Dendritic cell treated with granulocyte-macrophage colony-stimulating factor and Interleukin-4, amounts not matched to agents 40 ng/mL and 50 ng/mL, for 4 days (primary cell): ENCODE measurements at regions of chr19 and their contacts with region 1.

Region 1: DNA sequence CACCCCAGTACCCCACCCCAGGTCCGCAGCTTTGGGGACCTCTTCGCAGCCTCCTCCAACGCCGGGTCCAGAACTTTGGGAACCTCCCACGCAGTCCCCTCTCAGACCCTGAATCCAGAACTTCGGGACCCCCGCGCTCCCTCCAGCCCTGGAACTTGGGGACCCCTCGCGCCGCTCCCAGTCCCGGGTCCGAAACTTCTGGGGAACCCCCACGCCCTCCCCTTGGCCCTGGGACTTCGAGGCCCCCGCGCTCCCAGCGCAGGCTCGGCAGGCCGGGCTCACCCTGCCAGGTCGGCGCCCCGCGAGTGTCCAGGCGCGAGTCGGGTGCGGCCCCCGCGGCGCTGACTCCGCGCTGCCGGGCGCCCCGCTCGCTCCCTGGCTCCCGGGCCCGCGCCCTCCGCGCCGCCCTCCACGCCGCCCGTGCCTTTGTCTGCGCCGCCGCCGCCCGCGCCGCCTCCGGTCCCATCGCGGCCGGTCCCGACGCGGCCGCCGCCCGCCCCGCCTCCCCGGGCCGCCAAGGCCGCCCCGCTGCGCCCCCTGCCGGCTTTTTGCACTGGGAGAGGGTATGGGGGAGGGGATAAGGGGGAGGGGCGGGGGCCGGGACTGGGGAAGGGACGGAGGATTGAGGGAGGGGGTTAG is at the start of gene HOMER3:
- H3K4me3 Mint-ChIP-seq: peak within 1 kb of the TSS; percentile 89
- H3K27ac Mint-ChIP-seq: peak within 1 kb of the TSS; percentile 87
- H3K4me1 Mint-ChIP-seq: peaks cover 26% of the 10 kb centered on the region
- H3K27me3 Mint-ChIP-seq: no peaks in the 10 kb centered on the region

Region 2: GRCh38 chr19:18895038-18895823 is 45.7 kb before region 1 on chr19:
- intact Hi-C with region 1: no loop called
- H3K4me3 Mint-ChIP-seq: peak overlapping the region; percentile 63
- H3K27ac Mint-ChIP-seq: no peak overlapping the region
- H3K4me1 Mint-ChIP-seq: peaks cover 11% of the 10 kb centered on the region
- H3K27me3 Mint-ChIP-seq: peaks cover 57% of the 10 kb centered on the region

Region 3: DNA sequence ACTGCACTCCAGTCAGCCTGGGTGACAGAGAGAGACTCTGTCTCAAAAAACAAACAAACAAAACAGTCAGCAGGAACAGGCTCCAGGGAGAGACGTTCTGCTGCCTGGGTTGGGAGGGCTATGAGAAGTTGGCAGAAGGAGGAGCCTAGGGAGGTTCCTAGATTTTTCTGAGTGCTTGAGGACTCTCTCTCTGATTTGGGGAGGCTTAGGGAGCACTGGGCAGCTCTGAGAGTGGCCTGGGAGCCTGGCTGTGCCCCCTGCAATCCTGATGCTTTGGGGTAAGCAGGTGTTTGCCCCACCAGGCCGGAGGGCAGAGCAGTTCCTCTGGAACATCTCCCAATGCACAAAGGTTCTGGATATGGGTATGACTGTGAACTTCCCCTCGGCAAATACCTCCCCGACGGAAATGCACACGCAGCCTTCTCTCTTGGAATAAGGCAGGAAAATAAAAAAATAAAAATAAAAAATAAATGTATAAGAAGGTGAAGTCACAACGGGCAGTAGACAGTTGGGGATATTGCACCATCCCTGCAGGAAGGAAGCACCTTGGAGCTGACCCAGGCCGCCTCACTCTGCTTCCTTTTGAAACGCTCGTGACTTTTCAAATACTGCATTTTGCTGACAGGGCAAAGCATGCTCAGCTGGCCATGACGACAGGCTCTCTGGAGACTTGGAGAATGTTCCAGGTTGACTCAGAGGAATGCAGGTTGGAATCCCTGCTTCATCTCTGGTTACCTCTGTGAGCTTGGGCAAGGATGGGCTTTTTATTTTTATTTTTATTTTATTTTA is 26.7 kb after region 1 on chr19:
- intact Hi-C with region 1: loop called (anchors 2 kb)
- H3K4me3 Mint-ChIP-seq: peak overlapping the region; percentile 42
- H3K27ac Mint-ChIP-seq: peak overlapping the region; percentile 96
- H3K4me1 Mint-ChIP-seq: peaks cover 53% of the 10 kb centered on the region
- H3K27me3 Mint-ChIP-seq: no peaks in the 10 kb centered on the region

Region 4: GRCh38 chr19:18985257-18985656 is 44.4 kb after region 1 on chr19:
- intact Hi-C with region 1: loop called (anchors 5 kb)
- H3K4me3 Mint-ChIP-seq: peak overlapping the region; percentile 50
- H3K27ac Mint-ChIP-seq: peak overlapping the region; percentile 84
- H3K4me1 Mint-ChIP-seq: peaks cover 31% of the 10 kb centered on the region
- H3K27me3 Mint-ChIP-seq: no peaks in the 10 kb centered on the region